HEK293T (cell line): ENCODE measurements at regions of chr2 and their contacts with region 1.

Region 1: DNA sequence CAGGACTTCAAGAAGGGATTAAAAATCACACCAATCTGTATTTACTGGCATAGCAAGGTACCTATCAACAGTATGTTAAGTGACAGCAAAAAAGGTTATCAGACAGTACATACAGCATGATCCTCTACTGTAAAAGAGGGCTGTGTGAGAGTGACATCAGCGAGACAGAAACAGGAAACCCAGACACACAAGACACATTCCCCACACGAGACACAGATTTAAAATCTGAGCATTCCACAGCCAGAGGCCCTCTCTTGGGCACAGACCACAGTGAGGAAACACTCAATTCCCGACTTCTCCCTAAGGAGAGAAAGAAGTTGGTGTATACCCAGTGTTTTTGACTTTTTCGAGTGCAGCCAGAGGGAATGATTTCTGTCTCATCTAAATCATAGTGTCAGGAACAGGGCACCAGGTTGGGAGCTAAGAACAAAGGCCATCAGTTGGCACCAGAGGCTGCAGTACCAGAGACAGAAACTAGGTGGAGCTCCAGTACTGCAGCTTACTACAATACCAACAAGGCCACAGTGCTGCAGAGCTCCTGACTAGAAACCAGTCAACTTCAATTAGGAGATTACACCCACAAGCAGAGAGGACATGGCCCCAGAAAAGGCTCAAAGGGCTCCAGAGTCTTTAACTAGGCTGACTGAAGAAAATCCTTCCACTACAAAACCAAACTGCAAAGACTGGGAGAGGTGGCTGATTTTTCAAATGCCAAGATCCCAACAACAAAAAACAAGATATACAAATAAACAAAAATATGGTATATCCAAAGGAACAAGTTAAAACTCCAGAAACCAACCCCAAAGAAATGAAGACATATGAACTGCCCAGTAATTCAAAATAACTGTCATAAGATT is 41.0 kb downstream of the UNC50 start:
- DNase-seq: peak; percentile 69

Region 2: GRCh38 chr2:98821629-98822154 is 172.3 kb after region 1 on chr2:
- CTCF ChIA-PET with region 1: interaction called, 10 read pairs
- POLR2A ChIA-PET with region 1: no interaction called
- DNase-seq: no peak

Region 3: GRCh38 chr2:98835831-98836385 is 186.5 kb after region 1 on chr2:
- CTCF ChIA-PET with region 1: interaction called, 11 read pairs
- POLR2A ChIA-PET with region 1: no interaction called
- DNase-seq: no peak

Region 4: DNA sequence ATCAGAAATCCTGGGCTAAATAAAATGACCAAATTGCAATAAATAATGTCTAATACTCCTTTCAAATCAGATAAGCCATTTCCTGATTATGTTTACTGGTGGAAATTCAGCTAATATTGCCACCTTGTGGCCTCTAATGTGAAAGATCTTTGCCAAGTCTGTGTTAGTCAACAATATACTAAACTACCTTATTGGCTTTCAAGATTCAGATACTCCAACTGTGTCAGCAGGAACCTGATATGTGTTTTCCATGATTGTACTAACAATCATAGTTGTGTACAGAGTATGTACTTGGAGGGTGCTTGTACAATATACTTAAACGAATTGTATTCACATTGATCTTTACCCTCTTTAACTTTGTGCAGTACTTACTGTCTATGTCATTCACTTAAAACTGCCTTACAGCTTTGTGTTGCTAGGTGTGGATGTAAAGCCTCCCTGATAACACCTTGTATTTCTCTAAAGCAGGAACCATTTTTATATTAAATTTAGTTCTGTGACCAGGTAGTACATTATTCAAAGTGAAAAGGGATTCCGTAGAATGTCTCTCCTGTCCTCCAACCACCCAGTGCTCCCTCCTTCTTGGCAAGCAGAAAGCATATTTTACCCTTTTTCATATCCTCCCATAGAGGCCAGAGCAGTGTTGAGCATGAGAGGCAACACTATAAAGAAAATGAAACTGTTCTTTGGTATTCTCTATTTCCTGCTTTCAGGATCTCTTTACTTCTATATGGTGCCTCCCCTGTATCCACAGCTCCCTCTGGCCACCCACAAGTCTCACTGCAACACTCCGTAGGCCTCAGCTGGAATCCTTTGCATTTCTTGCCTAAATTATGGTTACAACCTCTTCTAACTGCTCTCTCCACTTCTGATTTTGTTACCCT is 417.0 kb after region 1 on chr2:
- CTCF ChIA-PET with region 1: interaction called, 10 read pairs
- POLR2A ChIA-PET with region 1: no interaction called
- DNase-seq: peak; percentile 31